AG04450 (cell line): ENCODE measurements at regions of chr11 and their contacts with region 1.

Region 1: DNA sequence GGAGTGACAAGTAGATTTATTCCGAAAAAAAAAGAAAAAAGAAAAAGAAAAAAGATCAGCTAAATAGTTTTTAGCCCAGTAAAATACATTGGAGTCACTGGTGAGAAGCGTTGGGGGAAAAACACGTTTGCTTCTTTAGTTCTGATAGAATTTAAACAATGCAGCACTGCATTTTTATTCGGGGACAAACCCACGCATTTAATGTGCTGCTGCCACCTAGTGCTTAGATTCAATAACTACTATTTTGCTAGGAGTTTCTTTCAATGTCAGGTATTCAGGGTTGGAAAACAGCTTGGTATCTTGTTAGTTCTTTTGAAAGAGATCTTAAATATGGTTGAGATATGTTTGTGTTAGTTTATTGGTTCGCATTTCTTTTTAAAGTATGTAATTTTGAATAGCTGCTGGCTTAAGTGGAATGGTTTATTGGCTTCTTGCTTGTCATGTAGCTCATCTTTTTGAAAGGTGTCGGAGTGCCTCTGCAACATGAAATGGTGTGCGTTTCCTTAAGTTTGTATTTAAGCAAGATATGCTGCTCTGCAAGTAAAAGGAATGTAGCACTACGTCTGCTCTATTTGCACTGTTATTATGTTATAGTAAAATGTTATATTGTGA is 41.9 kb downstream of the SVIP start:
- DNase-seq: peak; percentile 29
- H3K4me3 ChIP-seq: no peak overlapping the region
- H3K27ac ChIP-seq: no peak overlapping the region
- H3K27me3 ChIP-seq: no peaks in the 10 kb centered on the region
- CTCF ChIP-seq: peak; percentile 77

Region 2: DNA sequence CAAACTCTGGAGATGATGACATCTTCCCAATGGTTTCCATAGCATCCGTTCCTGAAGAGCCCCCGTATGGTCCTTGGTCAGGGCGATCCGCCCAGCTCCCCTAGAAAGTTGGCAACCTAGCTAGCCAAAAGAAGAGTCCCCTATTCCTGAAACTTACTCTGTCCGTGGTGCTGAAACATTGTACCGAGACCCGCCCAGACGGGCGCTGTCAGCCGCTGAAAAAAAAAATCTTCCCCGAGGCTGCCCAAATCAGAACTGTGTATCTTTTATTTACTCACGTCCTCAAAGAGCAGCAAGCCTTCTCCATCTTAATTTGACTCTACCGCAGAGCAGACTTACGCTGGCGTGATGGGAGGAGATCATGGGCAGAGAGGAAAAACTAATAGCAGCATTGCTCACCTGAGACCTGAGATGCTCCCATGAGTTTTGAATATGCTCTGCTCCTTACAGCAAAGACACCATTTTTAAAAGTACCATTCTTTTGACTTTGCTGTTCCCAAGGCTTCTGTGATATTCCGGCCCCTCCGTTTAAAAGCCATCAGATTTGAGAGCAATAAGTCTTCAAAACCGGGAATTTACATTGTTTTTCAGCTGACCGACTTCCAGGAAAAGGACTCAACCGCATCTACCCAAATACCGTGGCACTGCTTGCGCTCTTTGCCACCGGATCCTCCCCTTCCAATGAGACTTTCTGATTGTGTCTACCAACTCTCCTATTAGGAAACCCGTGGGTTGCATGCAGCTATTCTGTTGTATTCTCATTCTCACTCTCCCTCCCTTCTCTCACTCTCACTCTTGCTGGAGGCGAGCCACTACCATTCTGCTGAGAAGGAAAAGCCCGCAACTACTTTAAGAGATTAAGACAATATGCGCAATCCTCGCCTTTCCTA is 449.8 kb before region 1 on chr11 and contains the start of gene SLC17A6:
- CTCF ChIA-PET with region 1: interaction called, 24 read pairs
- POLR2A ChIA-PET with region 1: no interaction called
- DNase-seq: no peak
- H3K4me3 ChIP-seq: no peak within 1 kb of the TSS
- H3K27ac ChIP-seq: no peak within 1 kb of the TSS
- H3K27me3 ChIP-seq: peaks cover 47% of the 10 kb centered on the region
- CTCF ChIP-seq: no peak
- polyA plus RNA-seq, gene SLC17A6: not detected in 2 replicates

Region 3: GRCh38 chr11:22539821-22540256 is 247.8 kb before region 1 on chr11:
- CTCF ChIA-PET with region 1: interaction called, 13 read pairs
- POLR2A ChIA-PET with region 1: no interaction called
- DNase-seq: no peak
- H3K4me3 ChIP-seq: no peak overlapping the region
- H3K27ac ChIP-seq: no peak overlapping the region
- H3K27me3 ChIP-seq: no peaks in the 10 kb centered on the region
- CTCF ChIP-seq: peak; percentile 53

Region 4: GRCh38 chr11:22670830-22671229 is 116.8 kb before region 1 on chr11:
- CTCF ChIA-PET with region 1: interaction called, 14 read pairs
- POLR2A ChIA-PET with region 1: no interaction called
- DNase-seq: no peak
- H3K4me3 ChIP-seq: no peak overlapping the region
- H3K27ac ChIP-seq: no peak overlapping the region
- H3K27me3 ChIP-seq: peaks cover 24% of the 10 kb centered on the region
- CTCF ChIP-seq: peak; percentile 33; the same call in 1 of the 2 replicates

Region 5: GRCh38 chr11:22734628-22735345 is 52.9 kb before region 1 on chr11:
- CTCF ChIA-PET with region 1: interaction called, 10 read pairs
- POLR2A ChIA-PET with region 1: no interaction called
- DNase-seq: no peak
- H3K4me3 ChIP-seq: no peak overlapping the region
- H3K27ac ChIP-seq: no peak overlapping the region
- H3K27me3 ChIP-seq: no peaks in the 10 kb centered on the region
- CTCF ChIP-seq: no peak

Region 6: DNA sequence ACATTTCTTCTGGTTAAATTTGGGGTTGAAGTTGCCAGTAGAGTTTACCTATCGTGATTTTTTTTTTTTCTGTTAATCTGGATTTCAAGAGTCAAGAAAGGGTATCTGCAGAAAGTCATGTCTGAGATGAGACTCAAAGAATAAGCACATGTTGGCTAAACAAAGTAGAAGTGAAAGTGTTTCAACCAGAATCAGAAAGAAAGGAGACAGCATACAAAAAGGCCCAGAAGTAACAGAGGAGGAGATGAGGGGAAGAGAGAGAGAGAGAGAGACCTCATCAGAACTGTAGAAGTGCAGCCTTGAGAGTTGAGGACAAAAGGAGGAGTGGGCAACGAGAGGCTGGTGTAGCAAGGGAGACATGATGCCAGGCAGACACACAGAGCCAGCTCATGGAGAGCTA is 12.9 kb before region 1 on chr11:
- CTCF ChIA-PET with region 1: interaction called, 12 read pairs
- POLR2A ChIA-PET with region 1: no interaction called
- DNase-seq: no peak
- H3K4me3 ChIP-seq: no peak overlapping the region
- H3K27ac ChIP-seq: no peak overlapping the region
- H3K27me3 ChIP-seq: no peaks in the 10 kb centered on the region
- CTCF ChIP-seq: no peak

Region 7: DNA sequence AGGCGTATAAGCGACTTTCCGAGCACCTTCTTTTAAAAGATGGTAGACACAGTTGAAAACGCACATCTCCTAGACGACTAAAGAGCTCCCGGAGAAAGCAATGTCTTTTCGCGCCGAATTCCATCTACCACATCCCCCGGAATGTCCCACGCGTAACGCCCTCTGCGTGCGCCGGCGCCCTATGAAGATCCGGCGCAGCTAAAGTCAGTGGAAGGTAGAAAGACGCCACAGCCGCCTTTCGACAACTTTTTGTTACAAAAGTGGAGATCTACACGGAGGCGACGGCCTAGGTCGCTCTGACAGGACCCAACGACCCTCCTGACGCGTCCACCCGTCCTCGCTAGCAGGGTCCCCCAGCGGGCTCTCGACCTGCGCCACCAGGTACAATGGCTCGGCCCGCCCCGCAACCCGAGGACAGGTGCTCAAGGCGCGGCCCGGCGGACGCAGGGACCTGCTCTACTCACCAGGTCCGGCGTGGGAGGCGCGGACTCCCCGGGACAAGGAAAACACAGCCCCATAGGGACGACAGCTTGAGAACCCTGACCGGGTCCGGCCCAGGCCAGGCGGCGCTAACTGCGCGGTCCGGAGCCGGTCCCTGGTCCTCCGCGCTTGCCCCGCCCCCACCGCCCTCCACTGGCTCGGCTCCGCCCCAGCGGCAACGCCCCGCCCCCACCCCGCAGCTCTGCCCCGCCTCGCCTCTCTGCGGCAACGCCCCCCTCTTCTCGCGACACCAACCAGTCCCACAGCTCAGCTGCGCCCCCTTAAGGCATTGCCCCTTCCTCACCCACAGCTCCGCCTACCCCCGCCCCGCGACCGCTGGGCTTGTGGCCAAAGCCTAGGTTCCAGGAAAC is 41.8 kb after region 1 on chr11 and contains the start of gene SVIP:
- CTCF ChIA-PET with region 1: interaction called, 16 read pairs
- POLR2A ChIA-PET with region 1: no interaction called
- DNase-seq: peak; percentile 72
- H3K4me3 ChIP-seq: peak within 1 kb of the TSS; percentile 91
- H3K27ac ChIP-seq: peak within 1 kb of the TSS; percentile 35
- H3K27me3 ChIP-seq: no peaks in the 10 kb centered on the region
- CTCF ChIP-seq: peak; percentile 74
- polyA plus RNA-seq, gene SVIP: 7.4 and 10.3 TPM in 2 replicates